ENCODE measurements at regions of chrX and their contacts with region 1.

Region 1: GRCh38 chrX:118603981-118604380 is 108.4 kb downstream of the DOCK11 start:
- DNase-seq: peak in 4 of 5 donors; percentile 14 to 62 (median 36)
- H3K4me3 ChIP-seq: no peak overlapping the region
- H3K27ac ChIP-seq: no peak overlapping the region
- H3K4me1 ChIP-seq: no peaks in the 10 kb centered on the region
- H3K27me3 ChIP-seq: no peaks in the 10 kb centered on the region
- CTCF ChIP-seq: peak; percentile 28 to 51 (median 46)
- EP300 ChIP-seq: no peak
- POLR2A ChIP-seq: no peak

Region 2: DNA sequence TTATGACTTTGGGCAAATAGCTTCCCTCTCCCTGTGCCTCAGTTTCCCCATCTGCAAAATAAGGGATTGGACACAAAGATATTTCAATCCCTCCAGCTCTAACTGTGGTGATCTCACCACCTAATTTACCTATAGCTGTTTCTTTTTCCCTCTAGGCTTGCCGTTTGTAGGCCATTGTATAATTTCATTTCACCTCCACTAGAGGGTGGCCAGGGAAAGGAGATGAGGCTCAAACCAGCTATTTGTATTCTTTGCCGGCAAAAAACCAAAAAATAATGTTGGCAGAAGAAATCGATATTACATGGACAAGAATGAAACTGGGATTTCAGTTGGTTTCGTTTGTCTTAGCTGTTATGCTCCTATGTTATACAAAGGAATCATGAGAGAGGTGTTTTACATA is 144.5 kb before region 1 on chrX:
- intact Hi-C with region 1: loop called in 1 of 4 experiments (anchors 10 kb)
- DNase-seq: no peak
- H3K4me3 ChIP-seq: no peak overlapping the region
- H3K27ac ChIP-seq: no peak overlapping the region
- H3K4me1 ChIP-seq: no peaks in the 10 kb centered on the region
- H3K27me3 ChIP-seq: no peaks in the 10 kb centered on the region
- CTCF ChIP-seq: peak in 1 of 3 donors; percentile 37
- EP300 ChIP-seq: no peak
- POLR2A ChIP-seq: no peak

Region 3: GRCh38 chrX:118562582-118563164 is 41.3 kb before region 1 on chrX:
- intact Hi-C with region 1: no loop called
- DNase-seq: no peak
- H3K4me3 ChIP-seq: no peak overlapping the region
- H3K27ac ChIP-seq: no peak overlapping the region
- H3K4me1 ChIP-seq: no peaks in the 10 kb centered on the region
- H3K27me3 ChIP-seq: no peaks in the 10 kb centered on the region
- CTCF ChIP-seq: no peak
- EP300 ChIP-seq: no peak
- POLR2A ChIP-seq: no peak